ENCODE measurements at regions of chr3 and their contacts with region 1.

Region 1: GRCh38 chr3:4493014-4493940 is at the start of gene ITPR1:
- DNase-seq: peak; percentile 99
- ATAC-seq: peak; percentile 90
- H3K4me3 Mint-ChIP-seq: peak within 1 kb of the TSS; percentile 84
- H3K27ac Mint-ChIP-seq: peak within 1 kb of the TSS; percentile 96
- H3K4me1 Mint-ChIP-seq: peaks cover 20% of the 10 kb centered on the region
- H3K27me3 Mint-ChIP-seq: peaks cover 30% of the 10 kb centered on the region
- CTCF ChIP-seq: no peak
- total RNA-seq, gene ITPR1: 10.3 to 11.8 TPM (median 11.6 TPM) in 3 replicates

Region 2: DNA sequence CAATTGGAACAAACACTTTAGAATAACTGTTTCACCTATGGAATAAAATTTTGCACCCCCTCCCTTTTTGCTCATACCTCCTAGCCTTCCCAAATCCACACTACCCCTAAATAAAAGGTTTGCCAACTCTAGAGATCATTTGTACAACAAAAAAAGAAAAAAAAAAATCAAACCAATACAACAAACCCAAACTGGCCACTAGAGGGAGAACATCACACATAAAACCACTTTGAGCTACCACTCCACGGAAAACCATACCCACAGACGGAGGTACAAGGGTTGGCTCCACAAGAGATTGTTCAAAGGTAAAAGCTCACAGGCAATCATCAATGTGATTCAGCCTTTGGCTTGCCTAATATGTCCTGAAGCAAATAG is 142.5 kb before region 1 on chr3:
- CTCF ChIA-PET with region 1: interaction called, 17 read pairs
- POLR2A ChIA-PET with region 1: no interaction called
- DNase-seq: no peak
- ATAC-seq: 0 out of 2 replicates have a peak, but pooled peaks have one; percentile 26
- H3K4me3 Mint-ChIP-seq: no peak overlapping the region
- H3K27ac Mint-ChIP-seq: no peak overlapping the region
- H3K4me1 Mint-ChIP-seq: no peaks in the 10 kb centered on the region
- H3K27me3 Mint-ChIP-seq: no peaks in the 10 kb centered on the region
- CTCF ChIP-seq: peak; percentile 76

Region 3: GRCh38 chr3:4454142-4454541 is 39.1 kb before region 1 on chr3:
- CTCF ChIA-PET with region 1: no interaction called
- POLR2A ChIA-PET with region 1: no interaction called
- DNase-seq: no peak
- ATAC-seq: no peak
- H3K4me3 Mint-ChIP-seq: no peak overlapping the region
- H3K27ac Mint-ChIP-seq: no peak overlapping the region
- H3K4me1 Mint-ChIP-seq: no peaks in the 10 kb centered on the region
- H3K27me3 Mint-ChIP-seq: no peaks in the 10 kb centered on the region
- CTCF ChIP-seq: no peak

Region 4: DNA sequence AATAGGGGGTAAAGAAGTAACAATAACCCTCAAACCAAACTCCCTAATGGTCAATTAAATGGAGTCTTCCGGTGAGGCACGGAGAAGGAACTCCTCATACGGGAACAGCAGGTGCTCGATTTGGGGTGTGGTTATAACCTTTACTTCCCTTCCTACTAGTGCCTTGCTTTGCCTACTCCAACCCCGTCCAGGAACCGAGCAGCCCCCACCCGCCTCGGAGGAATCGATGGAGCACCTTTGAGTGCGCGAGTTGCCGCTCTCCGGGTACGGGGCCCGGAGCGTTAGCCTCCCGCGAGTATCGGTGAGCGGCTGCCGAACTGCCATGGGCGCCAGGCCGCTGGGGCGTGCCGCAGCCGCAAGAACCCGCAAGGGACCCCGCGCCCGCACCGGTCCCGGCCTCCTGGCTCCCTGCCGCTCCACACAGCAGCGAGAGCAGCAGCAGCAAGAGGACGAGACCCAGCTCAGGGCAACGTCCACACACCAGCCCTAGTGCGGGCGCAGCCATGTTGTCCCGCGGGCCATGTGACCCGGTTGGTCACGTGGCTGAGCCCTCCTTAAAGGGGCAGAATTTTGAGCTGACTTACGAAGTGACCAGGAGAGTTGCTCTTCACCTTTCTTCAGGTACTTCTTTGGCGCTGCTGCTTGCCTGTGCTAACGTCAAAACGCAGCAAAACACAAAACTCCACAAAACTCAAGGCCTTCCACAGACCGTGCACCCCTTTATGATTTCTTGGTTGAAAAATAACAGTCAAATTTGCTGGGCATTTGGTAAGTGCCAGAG is 26.3 kb before region 1 on chr3 and contains the start of gene SUMF1:
- CTCF ChIA-PET with region 1: interaction called, 7 read pairs
- POLR2A ChIA-PET with region 1: interaction called, 31 read pairs
- DNase-seq: peak; percentile 81
- ATAC-seq: peak; percentile 93
- H3K4me3 Mint-ChIP-seq: peak within 1 kb of the TSS; percentile 89
- H3K27ac Mint-ChIP-seq: peak within 1 kb of the TSS; percentile 97
- H3K4me1 Mint-ChIP-seq: peaks cover 10% of the 10 kb centered on the region
- H3K27me3 Mint-ChIP-seq: peaks cover 9% of the 10 kb centered on the region
- CTCF ChIP-seq: no peak
- total RNA-seq, gene SUMF1: 10.2 to 11.0 TPM (median 10.4 TPM) in 3 replicates

Region 5: DNA sequence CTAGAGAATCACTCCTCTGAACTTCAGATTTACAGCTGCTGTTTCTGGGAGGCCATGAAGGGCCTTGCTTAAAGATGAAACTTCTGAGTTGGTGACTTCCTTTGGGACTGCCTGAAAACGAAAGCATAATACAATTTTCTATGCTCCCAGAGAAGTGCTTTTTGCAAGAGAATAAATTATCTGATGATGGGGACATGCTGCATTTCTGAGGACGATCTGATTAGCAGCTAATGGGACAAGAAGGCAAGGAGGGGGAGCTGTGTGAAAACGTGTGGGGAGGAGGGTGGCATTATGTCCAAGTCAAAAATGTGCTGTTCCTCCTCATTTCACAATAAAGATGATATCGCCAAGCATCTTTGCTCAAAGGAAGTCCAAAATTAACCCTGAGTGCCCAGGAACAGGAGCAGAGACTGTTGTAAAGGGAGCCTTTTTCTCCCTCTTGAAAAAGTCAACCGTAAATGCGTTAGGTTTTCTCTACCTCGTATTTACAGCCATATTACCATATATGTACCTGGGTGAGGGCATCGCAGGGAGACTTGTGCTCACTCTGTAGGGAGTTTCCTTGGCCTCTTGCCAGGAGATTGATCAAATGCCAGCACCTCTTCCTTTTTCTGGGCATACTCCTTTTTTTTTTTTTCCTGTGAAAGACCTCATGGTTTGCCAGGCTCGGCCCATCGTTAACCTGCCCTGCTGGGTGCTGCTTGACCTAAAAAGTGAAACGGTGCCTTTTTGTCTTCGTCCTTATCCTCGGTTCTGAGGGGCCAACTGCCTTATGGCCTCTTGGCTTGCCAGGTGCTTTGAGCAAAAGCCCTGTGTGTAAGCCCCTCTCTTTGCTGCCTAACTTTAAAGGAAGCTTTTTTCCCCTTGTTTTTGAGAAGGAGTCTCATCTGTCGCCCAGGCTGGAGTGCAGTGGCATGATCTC is 11.3 kb after region 1 on chr3:
- CTCF ChIA-PET with region 1: interaction called, 7 read pairs
- POLR2A ChIA-PET with region 1: interaction called, 11 read pairs
- DNase-seq: no peak
- ATAC-seq: peak; percentile 35
- H3K4me3 Mint-ChIP-seq: no peak overlapping the region
- H3K27ac Mint-ChIP-seq: peak overlapping the region; percentile 15; the same call in 1 of the 2 replicates
- H3K4me1 Mint-ChIP-seq: peaks cover 22% of the 10 kb centered on the region
- H3K27me3 Mint-ChIP-seq: no peaks in the 10 kb centered on the region
- CTCF ChIP-seq: no peak

Region 6: DNA sequence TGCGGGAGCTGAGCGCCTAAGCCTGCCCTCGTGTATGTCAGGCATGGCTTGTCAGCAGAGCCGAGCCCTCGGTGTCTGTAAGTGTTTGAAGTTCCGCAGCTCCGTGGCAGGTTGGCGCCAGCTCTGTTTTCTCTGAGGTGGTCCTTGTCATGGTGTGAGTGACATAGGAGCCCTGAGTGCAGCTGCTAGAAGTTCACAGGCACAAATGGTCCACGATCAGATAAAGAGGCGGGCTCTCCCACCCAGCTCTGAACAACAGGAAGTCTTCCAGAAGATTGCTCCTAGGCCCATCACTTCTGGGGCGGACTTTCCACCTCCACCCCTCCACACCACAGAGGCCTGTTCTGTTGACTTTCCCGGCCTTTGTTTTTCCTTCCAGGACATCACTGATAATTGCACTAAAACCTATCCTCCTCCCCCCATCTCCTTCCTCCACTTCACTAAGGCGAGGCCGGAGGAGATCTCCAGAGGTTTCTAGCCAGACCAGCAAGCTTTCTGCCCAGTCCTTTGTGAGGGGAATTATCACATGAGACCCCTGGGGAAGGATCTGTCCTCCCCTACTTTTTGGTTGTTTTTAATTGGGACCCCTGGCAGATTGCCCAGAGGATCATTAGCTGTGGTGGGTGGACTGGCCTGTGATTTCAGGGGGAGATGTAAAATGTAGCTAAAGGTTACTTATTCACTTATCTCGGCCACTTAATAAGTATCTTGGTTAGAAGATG is 19.8 kb after region 1 on chr3:
- CTCF ChIA-PET with region 1: interaction called, 14 read pairs
- POLR2A ChIA-PET with region 1: interaction called, 9 read pairs
- DNase-seq: no peak
- ATAC-seq: no peak; the same call in 1 of the 2 replicates
- H3K4me3 Mint-ChIP-seq: no peak overlapping the region
- H3K27ac Mint-ChIP-seq: no peak overlapping the region
- H3K4me1 Mint-ChIP-seq: peaks cover 38% of the 10 kb centered on the region
- H3K27me3 Mint-ChIP-seq: no peaks in the 10 kb centered on the region
- CTCF ChIP-seq: no peak

Region 7: DNA sequence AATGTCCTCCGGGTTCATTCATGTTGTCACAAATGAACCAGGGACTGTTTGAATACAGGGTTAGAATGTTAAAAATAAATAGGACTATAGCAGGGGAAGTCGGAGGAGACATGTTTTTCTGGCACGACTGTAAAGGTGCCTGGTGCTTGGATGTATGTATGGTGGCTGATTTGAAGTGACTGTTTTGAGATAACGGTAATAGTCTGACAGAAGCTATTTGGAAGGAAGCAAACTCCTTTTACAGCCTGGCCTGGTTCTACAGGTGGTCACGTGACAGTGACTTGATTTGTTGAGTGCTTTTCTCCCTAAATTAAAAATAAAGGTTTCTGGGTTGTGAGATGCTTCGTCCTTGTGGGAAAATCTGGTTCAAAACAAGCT is 30.4 kb after region 1 on chr3:
- CTCF ChIA-PET with region 1: no interaction called
- POLR2A ChIA-PET with region 1: no interaction called
- DNase-seq: no peak
- ATAC-seq: no peak
- H3K4me3 Mint-ChIP-seq: no peak overlapping the region
- H3K27ac Mint-ChIP-seq: peak overlapping the region; percentile 6; the same call in 1 of the 2 replicates
- H3K4me1 Mint-ChIP-seq: no peaks in the 10 kb centered on the region
- H3K27me3 Mint-ChIP-seq: no peaks in the 10 kb centered on the region
- CTCF ChIP-seq: no peak